ENCODE measurements at regions of chr18 and their contacts with region 1.

Region 1: DNA sequence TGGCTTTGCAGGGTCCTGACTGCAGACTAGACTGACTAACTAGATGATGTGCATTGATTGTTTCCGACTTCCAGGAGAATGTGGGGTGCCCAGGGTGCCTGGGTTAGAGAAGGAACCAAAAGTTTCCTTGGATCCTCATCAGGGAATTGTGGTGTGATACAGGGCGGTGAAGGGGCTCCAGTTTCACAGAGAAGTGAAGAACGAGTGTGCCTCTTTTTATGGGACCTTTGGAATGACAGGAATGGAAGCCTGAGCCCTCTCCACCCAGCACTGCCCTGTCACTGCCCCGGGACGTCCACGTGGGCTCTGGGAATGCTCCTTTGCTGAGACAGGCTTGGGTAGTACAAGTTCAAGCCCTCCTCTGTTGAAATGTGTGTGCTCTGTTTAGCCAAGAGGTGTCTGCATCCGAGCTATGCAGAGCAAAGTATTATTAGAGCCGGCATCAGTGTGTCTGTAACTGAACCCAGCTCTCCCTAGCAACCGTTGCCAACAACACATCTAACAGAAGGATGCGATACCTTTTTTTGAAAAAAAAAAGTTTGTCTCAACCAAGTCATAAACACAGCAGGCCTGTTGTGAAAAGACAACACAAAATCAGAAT is 183.6 kb downstream of the SMAD7 start:
- DNase-seq: peak; percentile 55 to 85
- ATAC-seq: peak; percentile 81 to 84 (median 83)
- H3K4me3 ChIP-seq: no peak overlapping the region
- H3K27ac ChIP-seq: peak overlapping the region; percentile 77
- H3K4me1 ChIP-seq: peaks cover 62% of the 10 kb centered on the region
- H3K27me3 ChIP-seq: no peaks in the 10 kb centered on the region
- CTCF ChIP-seq: no peak

Region 2: DNA sequence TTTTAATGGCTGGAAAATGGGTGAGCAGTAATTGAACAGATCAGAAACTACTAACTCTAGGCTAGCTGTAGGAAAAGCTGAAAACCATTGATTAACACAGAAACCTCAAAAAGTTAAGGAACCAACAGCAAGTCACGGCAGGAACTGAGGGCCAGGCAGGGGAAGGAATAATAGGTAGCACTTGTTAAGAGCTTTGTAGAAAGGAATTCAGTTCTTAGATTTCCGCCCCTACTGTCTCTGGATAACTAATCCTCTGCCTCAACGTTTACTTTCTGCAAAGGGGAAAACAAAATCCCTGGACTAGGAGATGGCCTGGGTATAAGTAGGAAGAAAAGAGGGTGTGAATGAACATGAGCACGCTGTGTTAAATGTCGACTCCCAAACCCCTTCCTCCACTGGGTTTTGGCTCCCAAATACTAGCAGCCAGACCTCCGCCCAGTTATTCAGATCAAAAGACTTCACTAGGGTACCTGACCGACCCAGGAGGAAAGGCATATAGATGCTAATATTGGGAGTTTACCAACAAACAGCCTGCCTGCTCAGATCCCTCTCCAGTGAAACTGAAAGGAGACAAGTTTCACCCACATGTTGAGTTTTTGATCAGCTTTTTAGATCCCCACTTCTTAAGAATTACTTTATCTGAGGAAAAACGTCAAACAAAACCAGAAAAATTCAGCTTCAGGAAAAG is 849.1 kb before region 1 on chr18:
- intact Hi-C with region 1: no loop called
- DNase-seq: no peak
- ATAC-seq: no peak
- H3K4me3 ChIP-seq: no peak overlapping the region
- H3K27ac ChIP-seq: no peak overlapping the region
- H3K4me1 ChIP-seq: peaks cover 45% of the 10 kb centered on the region
- H3K27me3 ChIP-seq: no peaks in the 10 kb centered on the region
- CTCF ChIP-seq: no peak

Region 3: DNA sequence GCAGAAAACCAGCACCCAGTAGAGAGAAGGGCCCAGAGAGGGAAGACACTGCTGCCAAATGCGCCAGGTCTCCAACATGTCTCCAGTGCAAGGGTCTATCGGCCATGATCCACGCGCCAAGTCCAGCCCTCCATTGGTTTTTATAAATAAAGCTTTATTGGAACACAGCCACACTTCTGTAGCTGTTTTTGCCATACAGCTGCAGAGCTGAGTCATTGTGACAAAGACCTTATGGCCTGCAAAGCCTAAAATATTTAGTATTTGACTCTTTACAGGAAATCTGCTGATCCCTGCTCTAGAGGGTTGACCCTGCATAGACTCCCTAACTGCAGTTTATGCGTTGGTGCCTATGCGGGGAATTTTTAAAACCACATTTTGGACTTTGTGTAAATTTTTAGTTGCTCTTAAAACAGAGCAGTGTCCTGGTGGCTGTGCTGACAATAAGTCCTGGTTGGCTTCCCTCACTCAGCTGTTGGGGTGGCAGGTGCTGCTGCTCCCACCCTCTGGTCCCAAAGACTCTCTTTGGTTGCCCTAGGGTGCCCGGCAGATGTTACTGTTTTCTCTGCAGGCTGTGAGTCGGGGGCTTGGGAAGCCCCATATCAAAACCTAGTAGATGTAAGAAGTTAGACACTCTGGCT is 73.4 kb before region 1 on chr18:
- intact Hi-C with region 1: loop called (anchors 5 kb)
- DNase-seq: peak in 1 of 2 donors; percentile 22
- ATAC-seq: peak in 3 of 4 donors; percentile 32 to 46 (median 45)
- H3K4me3 ChIP-seq: no peak overlapping the region
- H3K27ac ChIP-seq: peak overlapping the region; percentile 77
- H3K4me1 ChIP-seq: peaks cover 34% of the 10 kb centered on the region
- H3K27me3 ChIP-seq: no peaks in the 10 kb centered on the region
- CTCF ChIP-seq: no peak

Region 4: GRCh38 chr18:48951448-48952286 is 184.5 kb after region 1 on chr18:
- intact Hi-C with region 1: loop called in 1 of 2 experiments (anchors 5 kb)
- DNase-seq: peak; percentile 92 to 94
- ATAC-seq: peak; percentile 69 to 77 (median 74)
- H3K4me3 ChIP-seq: peak overlapping the region; percentile 79
- H3K27ac ChIP-seq: peak overlapping the region; percentile 99
- H3K4me1 ChIP-seq: peaks cover 42% of the 10 kb centered on the region
- H3K27me3 ChIP-seq: no peaks in the 10 kb centered on the region
- CTCF ChIP-seq: peak; percentile 40

Measured in psoas muscle (tissue), 8 donors.